OCI-LY7 (cell line): ENCODE measurements at regions of chr10 and their contacts with region 1.

Region 1: GRCh38 chr10:99435986-99436638 is 5.7 kb upstream of the GOT1 start:
- DNase-seq: peak; percentile 61
- H3K4me3 ChIP-seq: no peak overlapping the region
- H3K27ac ChIP-seq: no peak overlapping the region
- H3K4me1 ChIP-seq: peaks cover 9% of the 10 kb centered on the region
- CTCF ChIP-seq: peak; percentile 89

Region 2: DNA sequence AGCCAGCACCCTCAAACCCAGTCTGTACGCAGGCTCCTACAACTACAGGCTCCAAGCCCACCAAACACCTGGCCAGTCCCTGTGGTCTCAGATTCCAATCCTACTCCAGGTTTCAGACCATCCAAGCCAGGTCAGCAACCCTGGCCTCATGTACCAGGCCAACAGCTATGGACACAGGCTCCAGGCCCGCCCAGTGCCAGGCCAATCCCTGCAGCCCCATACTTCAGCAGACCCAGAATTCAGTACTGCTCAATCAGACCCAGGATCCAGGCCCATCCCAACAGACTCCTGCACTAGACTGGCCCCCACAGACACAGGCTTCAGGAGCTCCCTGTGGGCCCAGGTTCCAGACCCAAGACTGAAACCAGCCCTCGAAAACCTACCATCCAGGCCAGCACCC is 232.8 kb before region 1 on chr10:
- CTCF ChIA-PET with region 1: no interaction called
- POLR2A ChIA-PET with region 1: no interaction called
- intact Hi-C with region 1: no loop called
- DNase-seq: no peak
- H3K4me3 ChIP-seq: no peak overlapping the region
- H3K27ac ChIP-seq: no peak overlapping the region
- H3K4me1 ChIP-seq: no peaks in the 10 kb centered on the region
- CTCF ChIP-seq: no peak

Region 3: DNA sequence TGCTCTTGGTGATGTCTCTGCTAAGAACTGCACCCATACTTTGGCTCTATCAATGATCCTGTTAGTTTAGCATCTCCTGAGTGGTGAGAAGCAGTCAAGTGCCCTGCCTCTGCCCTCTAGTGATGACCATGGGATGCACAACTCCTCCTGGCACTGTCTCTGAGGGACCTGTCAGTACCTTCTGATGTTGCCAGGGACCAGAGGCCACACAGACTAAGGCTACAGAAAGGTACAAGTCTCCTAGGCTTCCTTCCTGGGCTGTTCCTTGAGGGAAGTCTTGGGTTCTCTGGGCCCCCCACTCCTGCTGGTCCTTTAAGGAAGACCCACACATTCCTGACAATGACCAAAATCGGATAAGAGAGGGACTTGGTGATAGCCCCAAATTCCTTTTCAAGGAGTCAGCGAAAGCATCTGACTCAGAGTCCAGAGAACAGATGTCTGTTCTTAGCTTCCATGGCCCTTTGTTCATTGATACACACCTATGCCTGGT is 112.0 kb after region 1 on chr10:
- CTCF ChIA-PET with region 1: no interaction called
- POLR2A ChIA-PET with region 1: no interaction called
- intact Hi-C with region 1: loop called (anchors 5 kb)
- DNase-seq: peak; percentile 25
- H3K4me3 ChIP-seq: no peak overlapping the region
- H3K27ac ChIP-seq: no peak overlapping the region
- H3K4me1 ChIP-seq: no peaks in the 10 kb centered on the region
- CTCF ChIP-seq: peak; percentile 60